Naive thymus-derived CD4-positive, alpha-beta T cell (primary cell): ENCODE measurements at regions of chr7 and their contacts with region 1.

Region 1: GRCh38 chr7:35424869-35425495 is 171.1 kb upstream of the TBX20 start:
- DNase-seq: peak in 8 of 9 donors; percentile 17 to 51 (median 42)
- ATAC-seq: peak; percentile 85
- H3K4me3 ChIP-seq: no peak overlapping the region
- H3K4me3 Mint-ChIP-seq: no peak overlapping the region
- H3K27ac ChIP-seq: no peak overlapping the region
- H3K27ac Mint-ChIP-seq: no peak overlapping the region
- H3K4me1 ChIP-seq: no peaks in the 10 kb centered on the region
- H3K4me1 Mint-ChIP-seq: peaks cover 0 to 7% (median 0%) of the 10 kb centered on the region in 7 donors
- H3K27me3 ChIP-seq: no peaks in the 10 kb centered on the region
- H3K27me3 Mint-ChIP-seq: peaks cover 0 to 35% (median 23%) of the 10 kb centered on the region in 5 donors

Region 2: GRCh38 chr7:35519971-35520809 is 95.2 kb after region 1 on chr7:
- CTCF ChIA-PET with region 1: interaction called, 5 read pairs
- POLR2A ChIA-PET with region 1: no interaction called
- intact Hi-C with region 1: loop called (anchors 1 kb)
- DNase-seq: peak in 6 of 9 donors; percentile 38 to 47 (median 40)
- ATAC-seq: peak; percentile 79
- H3K4me3 ChIP-seq: no peak overlapping the region
- H3K4me3 Mint-ChIP-seq: no peak overlapping the region
- H3K27ac ChIP-seq: no peak overlapping the region
- H3K27ac Mint-ChIP-seq: no peak overlapping the region
- H3K4me1 ChIP-seq: no peaks in the 10 kb centered on the region
- H3K4me1 Mint-ChIP-seq: peaks cover 0 to 6% (median 4%) of the 10 kb centered on the region in 7 donors
- H3K27me3 ChIP-seq: no peaks in the 10 kb centered on the region
- H3K27me3 Mint-ChIP-seq: peaks cover 0 to 33% (median 17%) of the 10 kb centered on the region in 5 donors

Region 3: DNA sequence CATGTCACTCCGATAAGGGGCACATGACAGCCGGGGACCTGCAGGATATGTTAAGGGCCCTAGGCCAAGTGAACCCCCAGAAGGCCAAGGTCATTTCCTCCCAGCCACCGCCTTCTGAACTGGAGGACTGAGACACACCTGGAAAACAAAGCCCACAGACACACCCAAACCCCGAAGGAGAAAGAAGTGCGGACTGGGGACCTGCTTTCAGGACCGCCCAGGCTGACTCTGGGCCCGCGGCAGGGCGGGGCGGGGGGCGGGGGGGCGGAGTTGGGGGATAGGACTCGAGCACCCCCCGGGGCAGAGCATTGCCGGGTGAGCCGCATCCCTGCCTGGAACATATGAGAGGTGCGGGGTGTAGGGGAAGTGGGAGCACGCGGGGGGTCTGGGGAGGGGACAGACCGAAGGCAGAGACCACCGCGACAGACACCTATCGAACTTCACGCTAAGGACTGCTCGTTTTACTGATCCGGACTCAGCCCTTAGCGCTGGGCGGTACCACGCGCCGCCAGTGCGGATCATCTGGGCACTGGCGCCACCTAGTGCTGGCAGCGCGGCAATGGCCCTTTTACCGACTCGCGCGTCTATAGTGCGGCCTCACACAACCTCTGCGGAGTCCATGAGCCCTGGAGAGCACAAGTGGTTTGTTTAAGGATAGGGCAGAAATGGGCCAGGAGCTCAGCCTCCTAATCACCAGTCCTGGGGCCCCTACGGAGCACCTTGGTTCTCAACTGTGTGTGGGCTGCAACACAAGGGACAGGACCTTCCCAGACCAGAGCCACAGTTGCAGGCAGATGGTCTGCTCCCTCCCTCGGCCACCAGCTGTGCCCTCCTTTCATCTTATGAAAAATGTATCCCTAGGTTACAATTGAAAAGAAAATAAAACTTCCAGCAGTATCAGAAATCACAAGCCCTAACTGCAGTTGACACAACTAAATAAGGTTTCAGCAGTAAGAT is 112.4 kb after region 1 on chr7:
- CTCF ChIA-PET with region 1: interaction called, 3 read pairs
- POLR2A ChIA-PET with region 1: no interaction called
- intact Hi-C with region 1: loop called (anchors 1 kb)
- DNase-seq: peak; percentile 51 to 82 (median 75)
- ATAC-seq: peak; percentile 98
- H3K4me3 ChIP-seq: peak overlapping the region; percentile 46
- H3K4me3 Mint-ChIP-seq: peak overlapping the region; percentile 66 to 87 (median 80)
- H3K27ac ChIP-seq: no peak overlapping the region
- H3K27ac Mint-ChIP-seq: no peak overlapping the region
- H3K4me1 ChIP-seq: no peaks in the 10 kb centered on the region
- H3K4me1 Mint-ChIP-seq: peaks cover 0 to 4% (median 0%) of the 10 kb centered on the region in 7 donors
- H3K27me3 ChIP-seq: no peaks in the 10 kb centered on the region
- H3K27me3 Mint-ChIP-seq: peaks cover 0 to 24% (median 15%) of the 10 kb centered on the region in 5 donors

Region 4: DNA sequence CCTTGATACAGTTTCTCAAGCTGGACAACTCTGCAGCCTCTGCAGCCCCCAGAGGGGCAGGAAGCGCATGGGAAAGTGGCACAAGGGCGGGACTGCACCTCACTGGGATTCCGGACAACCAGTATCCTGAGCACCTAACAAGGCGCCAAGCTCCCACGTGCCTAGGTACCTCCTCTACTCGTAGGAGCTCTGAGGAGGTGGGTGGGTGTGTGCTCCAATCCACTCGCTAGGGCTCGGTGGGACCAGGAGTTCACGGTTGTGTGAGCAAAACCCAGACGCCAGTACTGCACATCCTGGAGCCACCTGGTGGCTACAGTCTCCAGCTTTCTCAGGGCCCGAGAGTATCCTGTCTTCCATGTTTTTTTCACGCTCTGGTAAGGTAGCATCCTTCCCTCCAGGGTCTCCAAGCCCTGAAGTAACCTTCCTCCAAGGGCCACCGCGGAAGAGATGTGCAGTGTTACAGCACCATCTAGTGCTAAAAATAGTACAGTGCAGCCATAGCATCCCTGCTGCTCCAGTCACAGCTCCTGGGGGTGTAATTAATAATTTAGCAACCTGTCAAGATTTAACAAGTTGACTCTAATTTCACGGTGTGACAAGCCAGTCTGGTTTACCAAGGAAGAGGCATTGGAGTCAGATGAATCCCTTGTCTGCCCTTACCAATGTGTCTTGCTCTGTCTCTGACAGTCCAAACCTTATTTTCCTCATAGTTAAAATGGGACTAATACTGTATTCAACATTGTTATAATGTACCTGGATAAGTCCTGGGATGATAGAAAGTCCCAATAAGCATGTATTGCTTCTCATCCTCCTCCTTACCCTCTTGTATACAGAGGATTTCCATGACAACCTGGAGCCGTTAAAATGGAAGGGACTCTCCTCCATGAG is 199.6 kb after region 1 on chr7:
- CTCF ChIA-PET with region 1: interaction called, 3 read pairs
- POLR2A ChIA-PET with region 1: no interaction called
- intact Hi-C with region 1: loop called (anchors 1 kb)
- DNase-seq: peak; percentile 6 to 47 (median 33)
- ATAC-seq: peak; percentile 88
- H3K4me3 ChIP-seq: no peak overlapping the region
- H3K4me3 Mint-ChIP-seq: peak overlapping the region in 5 of 10 donors; percentile 7 to 35 (median 17)
- H3K27ac ChIP-seq: no peak overlapping the region
- H3K27ac Mint-ChIP-seq: peak overlapping the region in 1 of 9 donors; percentile 26
- H3K4me1 ChIP-seq: peaks cover 0 to 4% of the 10 kb centered on the region in 2 donors
- H3K4me1 Mint-ChIP-seq: peaks cover 2 to 8% (median 5%) of the 10 kb centered on the region in 7 donors
- H3K27me3 ChIP-seq: no peaks in the 10 kb centered on the region
- H3K27me3 Mint-ChIP-seq: no peaks in the 10 kb centered on the region

Region 5: DNA sequence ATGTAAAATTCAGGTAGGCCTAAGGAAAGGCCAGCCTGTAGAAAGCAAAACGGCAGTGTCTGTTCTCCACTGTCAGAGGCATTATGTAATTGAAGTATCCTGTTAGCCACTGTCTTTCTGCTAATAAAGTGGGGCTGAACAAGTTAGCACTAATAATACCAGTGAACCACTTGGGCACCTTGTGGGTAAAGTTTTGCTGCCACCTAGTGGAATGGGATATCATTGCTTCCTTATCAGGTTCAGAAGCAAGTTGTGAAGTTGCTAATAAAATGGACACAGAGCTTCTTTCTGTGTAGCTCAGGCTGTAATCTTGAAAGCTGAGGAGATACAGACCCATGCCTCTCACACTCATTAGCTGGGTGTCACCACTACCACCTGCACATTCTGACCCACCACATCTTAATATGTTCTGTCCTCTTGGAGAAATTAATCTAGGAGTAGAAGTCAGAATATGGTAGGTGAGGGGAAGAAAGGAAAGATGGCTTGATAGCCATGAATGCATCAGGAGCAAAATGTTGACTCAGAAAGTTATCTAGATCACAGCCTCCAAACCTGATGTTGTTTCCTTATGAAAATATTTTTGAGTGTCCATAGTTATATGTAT is 551.0 kb after region 1 on chr7:
- CTCF ChIA-PET with region 1: no interaction called
- POLR2A ChIA-PET with region 1: no interaction called
- intact Hi-C with region 1: loop called in 1 of 2 experiments (anchors 10 kb)
- DNase-seq: peak in 7 of 9 donors; percentile 22 to 68 (median 58)
- ATAC-seq: peak; percentile 82
- H3K4me3 ChIP-seq: no peak overlapping the region
- H3K4me3 Mint-ChIP-seq: no peak overlapping the region
- H3K27ac ChIP-seq: no peak overlapping the region
- H3K27ac Mint-ChIP-seq: no peak overlapping the region
- H3K4me1 ChIP-seq: peaks cover 0 to 3% of the 10 kb centered on the region in 2 donors
- H3K4me1 Mint-ChIP-seq: peaks cover 0 to 8% (median 6%) of the 10 kb centered on the region in 7 donors
- H3K27me3 ChIP-seq: peaks cover 0 to 7% of the 10 kb centered on the region in 2 donors
- H3K27me3 Mint-ChIP-seq: peaks cover 9 to 56% (median 14%) of the 10 kb centered on the region in 5 donors